Naive thymus-derived CD4-positive, alpha-beta T cell (primary cell): ENCODE measurements at regions of chr10 and their contacts with region 1.

Region 1: GRCh38 chr10:109883859-109884771 is 39.2 kb downstream of the XPNPEP1 start:
- DNase-seq: peak; percentile 33 to 66 (median 51)
- ATAC-seq: peak; percentile 88
- H3K4me3 ChIP-seq: no peak overlapping the region
- H3K4me3 Mint-ChIP-seq: no peak overlapping the region
- H3K27ac ChIP-seq: no peak overlapping the region
- H3K27ac Mint-ChIP-seq: peak overlapping the region in 3 of 9 donors; percentile 9 to 25 (median 22)
- H3K4me1 ChIP-seq: no peaks in the 10 kb centered on the region
- H3K4me1 Mint-ChIP-seq: peaks cover 5 to 19% (median 9%) of the 10 kb centered on the region in 7 donors
- H3K27me3 ChIP-seq: no peaks in the 10 kb centered on the region
- H3K27me3 Mint-ChIP-seq: no peaks in the 10 kb centered on the region

Region 2: DNA sequence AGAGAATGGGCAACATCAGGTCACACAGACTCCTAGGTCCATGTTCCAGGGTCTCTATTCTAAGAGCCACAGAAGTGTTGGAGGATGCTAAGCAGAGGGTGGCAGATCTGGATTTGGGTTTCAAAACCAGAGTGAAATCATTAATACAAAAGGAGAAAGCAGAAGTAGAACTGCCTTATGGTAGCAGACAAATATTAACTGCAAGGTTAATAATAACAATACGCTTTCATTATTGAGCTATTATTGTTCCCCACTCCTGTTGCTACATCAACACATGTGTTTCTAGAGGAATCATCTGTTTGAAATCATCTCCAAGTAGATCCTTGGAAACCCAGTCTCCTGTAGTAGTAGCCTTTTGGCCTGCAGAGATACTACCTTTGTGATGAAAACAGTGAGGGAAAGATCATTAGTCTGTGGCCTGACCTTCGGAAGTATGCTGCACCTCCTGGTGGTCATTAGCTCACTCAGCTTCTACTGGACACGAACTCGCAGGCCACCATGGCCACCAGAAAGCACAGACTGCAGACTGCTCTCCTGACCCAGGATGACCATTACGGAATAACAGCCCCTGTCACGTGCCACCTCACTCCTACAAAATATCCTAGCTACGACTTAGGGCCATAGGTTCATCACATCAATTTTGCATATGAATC is 45.4 kb before region 1 on chr10:
- CTCF ChIA-PET with region 1: no interaction called
- POLR2A ChIA-PET with region 1: no interaction called
- intact Hi-C with region 1: no loop called
- DNase-seq: no peak
- ATAC-seq: no peak
- H3K4me3 ChIP-seq: no peak overlapping the region
- H3K4me3 Mint-ChIP-seq: no peak overlapping the region
- H3K27ac ChIP-seq: no peak overlapping the region
- H3K27ac Mint-ChIP-seq: no peak overlapping the region
- H3K4me1 ChIP-seq: no peaks in the 10 kb centered on the region
- H3K4me1 Mint-ChIP-seq: no peaks in the 10 kb centered on the region
- H3K27me3 ChIP-seq: peaks cover 0 to 6% of the 10 kb centered on the region in 2 donors
- H3K27me3 Mint-ChIP-seq: peaks cover 18 to 36% (median 22%) of the 10 kb centered on the region in 5 donors

Region 3: DNA sequence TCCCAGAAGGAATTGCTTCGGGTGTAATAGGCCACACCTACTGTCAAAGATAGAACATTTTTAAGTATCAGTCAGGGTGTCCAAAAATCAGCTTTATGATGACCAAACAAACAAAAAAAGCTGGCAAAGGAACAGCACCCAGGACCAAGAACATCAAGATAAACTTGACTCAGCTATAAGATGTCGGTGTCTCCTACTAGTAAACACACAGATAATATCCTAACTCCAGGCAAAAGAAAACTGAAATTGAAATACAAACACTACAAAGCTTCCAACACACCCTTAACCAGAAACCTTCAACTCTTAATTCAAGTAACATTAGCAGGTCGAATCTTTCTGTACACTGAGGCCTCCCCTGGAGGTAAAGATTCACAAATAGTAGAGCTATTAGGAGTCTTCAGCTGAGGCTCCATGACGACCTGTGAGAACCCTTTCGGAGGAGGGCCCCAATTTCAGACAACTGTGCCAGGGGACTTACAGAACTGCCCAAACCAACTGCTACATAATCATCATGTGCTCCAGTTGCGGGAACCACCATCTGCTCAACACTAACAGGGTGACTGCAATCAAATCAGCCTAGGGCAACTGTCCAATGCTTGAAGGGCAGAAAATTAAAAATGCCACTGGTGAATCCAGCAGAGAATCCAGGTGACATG is 18.9 kb after region 1 on chr10:
- CTCF ChIA-PET with region 1: interaction called, 5 read pairs
- POLR2A ChIA-PET with region 1: no interaction called
- intact Hi-C with region 1: loop called in 1 of 2 experiments (anchors 2 kb)
- DNase-seq: peak in 2 of 9 donors; percentile 32 to 43
- ATAC-seq: peak; percentile 78
- H3K4me3 ChIP-seq: peak overlapping the region; percentile 5
- H3K4me3 Mint-ChIP-seq: peak overlapping the region in 9 of 10 donors; percentile 8 to 76 (median 60)
- H3K27ac ChIP-seq: no peak overlapping the region
- H3K27ac Mint-ChIP-seq: peak overlapping the region in 8 of 9 donors; percentile 79 to 93 (median 86)
- H3K4me1 ChIP-seq: peaks cover 0 to 14% of the 10 kb centered on the region in 2 donors
- H3K4me1 Mint-ChIP-seq: peaks cover 27 to 68% (median 52%) of the 10 kb centered on the region in 7 donors
- H3K27me3 ChIP-seq: no peaks in the 10 kb centered on the region
- H3K27me3 Mint-ChIP-seq: no peaks in the 10 kb centered on the region

Region 4: GRCh38 chr10:109934958-109935706 is 51.0 kb after region 1 on chr10:
- CTCF ChIA-PET with region 1: interaction called, 5 read pairs
- POLR2A ChIA-PET with region 1: interaction called, 3 read pairs
- intact Hi-C with region 1: loop called in 1 of 2 experiments (anchors 1 kb)
- DNase-seq: peak in 8 of 9 donors; percentile 23 to 54 (median 46)
- ATAC-seq: peak; percentile 47
- H3K4me3 ChIP-seq: peak overlapping the region; percentile 33
- H3K4me3 Mint-ChIP-seq: peak overlapping the region; percentile 72 to 97 (median 87)
- H3K27ac ChIP-seq: peak overlapping the region; percentile 64
- H3K27ac Mint-ChIP-seq: peak overlapping the region; percentile 88 to 99 (median 96)
- H3K4me1 ChIP-seq: peaks cover 36 to 56% of the 10 kb centered on the region in 2 donors
- H3K4me1 Mint-ChIP-seq: peaks cover 33 to 83% (median 71%) of the 10 kb centered on the region in 7 donors
- H3K27me3 ChIP-seq: no peaks in the 10 kb centered on the region
- H3K27me3 Mint-ChIP-seq: peaks cover 0 to 8% (median 0%) of the 10 kb centered on the region in 5 donors

Region 5: GRCh38 chr10:110016039-110016438 is 131.9 kb after region 1 on chr10:
- CTCF ChIA-PET with region 1: interaction called, 5 read pairs
- POLR2A ChIA-PET with region 1: no interaction called
- intact Hi-C with region 1: loop called in 1 of 2 experiments (anchors 1 kb)
- DNase-seq: no peak
- ATAC-seq: no peak
- H3K4me3 ChIP-seq: no peak overlapping the region
- H3K4me3 Mint-ChIP-seq: peak overlapping the region; percentile 5 to 81 (median 64)
- H3K27ac ChIP-seq: peak overlapping the region; percentile 18
- H3K27ac Mint-ChIP-seq: peak overlapping the region in 8 of 9 donors; percentile 40 to 91 (median 80)
- H3K4me1 ChIP-seq: peaks cover 57 to 77% of the 10 kb centered on the region in 2 donors
- H3K4me1 Mint-ChIP-seq: peaks cover 64 to 97% (median 83%) of the 10 kb centered on the region in 7 donors
- H3K27me3 ChIP-seq: no peaks in the 10 kb centered on the region
- H3K27me3 Mint-ChIP-seq: no peaks in the 10 kb centered on the region

Region 6: GRCh38 chr10:110225756-110226542 is 341.8 kb after region 1 on chr10:
- CTCF ChIA-PET with region 1: interaction called, 3 read pairs
- POLR2A ChIA-PET with region 1: no interaction called
- intact Hi-C with region 1: loop called in 1 of 2 experiments (anchors 2 kb)
- DNase-seq: peak; percentile 83 to 91 (median 88)
- ATAC-seq: peak; percentile 73
- H3K4me3 ChIP-seq: peak overlapping the region; percentile 75
- H3K4me3 Mint-ChIP-seq: peak overlapping the region; percentile 87 to 99 (median 94)
- H3K27ac ChIP-seq: peak overlapping the region; percentile 92
- H3K27ac Mint-ChIP-seq: peak overlapping the region; percentile 78 to 97 (median 96)
- H3K4me1 ChIP-seq: peaks cover 16 to 27% of the 10 kb centered on the region in 2 donors
- H3K4me1 Mint-ChIP-seq: peaks cover 27 to 68% (median 49%) of the 10 kb centered on the region in 7 donors
- H3K27me3 ChIP-seq: no peaks in the 10 kb centered on the region
- H3K27me3 Mint-ChIP-seq: no peaks in the 10 kb centered on the region

Region 7: GRCh38 chr10:110547139-110547761 is 663.1 kb after region 1 on chr10:
- CTCF ChIA-PET with region 1: interaction called, 3 read pairs
- POLR2A ChIA-PET with region 1: no interaction called
- intact Hi-C with region 1: loop called in 1 of 2 experiments (anchors 5 kb)
- DNase-seq: peak in 7 of 9 donors; percentile 40 to 75 (median 68)
- ATAC-seq: peak; percentile 85
- H3K4me3 ChIP-seq: no peak overlapping the region
- H3K4me3 Mint-ChIP-seq: peak overlapping the region in 1 of 10 donors; percentile 2
- H3K27ac ChIP-seq: no peak overlapping the region
- H3K27ac Mint-ChIP-seq: peak overlapping the region in 2 of 9 donors; percentile 3 to 6
- H3K4me1 ChIP-seq: peaks cover 0 to 5% of the 10 kb centered on the region in 2 donors
- H3K4me1 Mint-ChIP-seq: peaks cover 3 to 16% (median 5%) of the 10 kb centered on the region in 7 donors
- H3K27me3 ChIP-seq: no peaks in the 10 kb centered on the region
- H3K27me3 Mint-ChIP-seq: peaks cover 0 to 39% (median 11%) of the 10 kb centered on the region in 5 donors